ENCODE measurements at regions of chr1 and their contacts with region 1.

Region 1: GRCh38 chr1:30911046-30911954 is 2.7 kb upstream of the SDC3 start:
- DNase-seq: peak; percentile 94
- ATAC-seq: peak; percentile 68

Region 2: DNA sequence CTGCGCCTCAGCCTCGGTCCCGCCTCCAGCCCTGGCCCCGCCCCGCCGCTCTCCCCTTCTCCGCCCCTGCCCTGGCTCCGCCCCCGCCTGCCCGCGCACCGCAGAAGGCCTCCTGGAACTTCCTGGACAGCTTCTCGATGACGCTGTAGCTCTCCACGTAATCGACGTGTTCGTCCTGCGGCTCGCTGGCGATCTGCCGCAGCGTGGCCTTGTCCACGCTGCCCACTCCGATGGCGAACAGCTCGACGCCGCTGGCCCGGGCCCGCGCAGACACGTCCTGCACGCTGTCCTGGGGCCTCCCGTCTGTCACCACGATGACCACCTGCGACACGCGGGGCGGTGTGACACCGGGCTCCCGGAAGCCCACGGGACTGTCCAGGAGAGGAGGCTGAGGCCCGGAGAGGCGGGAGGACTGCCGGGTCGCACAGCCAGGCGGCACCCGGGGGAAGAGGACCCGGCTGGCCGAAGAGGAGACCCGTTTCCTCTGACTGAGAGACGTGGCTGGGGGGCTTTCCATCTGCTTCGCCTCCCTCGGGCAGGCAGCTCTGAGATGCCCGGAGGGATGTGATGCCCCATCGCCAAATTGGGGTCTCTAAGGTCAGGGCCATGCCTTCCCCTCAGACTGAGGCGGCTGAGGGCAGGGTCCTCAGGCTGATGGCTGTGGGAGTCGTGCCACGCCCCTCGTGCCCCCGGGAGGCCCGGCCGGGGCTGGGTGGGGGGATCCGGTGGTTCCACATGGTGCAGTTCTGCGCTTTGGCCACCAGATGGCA is 192.5 kb before region 1 on chr1:
- intact Hi-C with region 1: loop called (anchors 2 to 5 kb)
- DNase-seq: peak; percentile 98
- ATAC-seq: peak; percentile 87 to 89

Region 3: GRCh38 chr1:30779294-30780071 is 131.8 kb before region 1 on chr1:
- intact Hi-C with region 1: loop called (anchors 1 to 5 kb)
- DNase-seq: peak; percentile 84
- ATAC-seq: peak; percentile 65 to 72

Region 4: DNA sequence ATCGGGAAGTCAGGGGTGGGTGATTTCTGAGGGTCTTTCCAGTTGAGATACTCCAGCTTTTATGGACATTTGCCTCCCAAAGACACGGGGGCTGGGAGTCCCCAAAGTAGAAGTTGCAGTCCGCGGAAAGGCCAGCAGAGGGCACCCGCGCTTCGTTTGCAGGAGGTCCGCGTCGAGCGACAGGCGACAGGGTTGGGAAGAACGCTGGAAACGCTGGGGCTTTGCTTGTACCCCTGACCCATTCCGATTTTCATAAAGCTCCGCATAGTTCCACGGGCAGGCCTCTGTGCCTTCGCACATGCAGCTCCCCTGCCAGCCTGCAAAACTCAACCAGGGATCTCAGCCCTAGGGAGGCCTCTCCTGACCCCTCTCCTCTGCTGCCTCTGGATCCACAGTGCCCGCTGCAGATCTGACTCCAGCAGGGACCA is 109.5 kb before region 1 on chr1:
- intact Hi-C with region 1: loop called (anchors 1 to 5 kb)
- DNase-seq: peak; percentile 83
- ATAC-seq: peak; percentile 38 to 66

Region 5: DNA sequence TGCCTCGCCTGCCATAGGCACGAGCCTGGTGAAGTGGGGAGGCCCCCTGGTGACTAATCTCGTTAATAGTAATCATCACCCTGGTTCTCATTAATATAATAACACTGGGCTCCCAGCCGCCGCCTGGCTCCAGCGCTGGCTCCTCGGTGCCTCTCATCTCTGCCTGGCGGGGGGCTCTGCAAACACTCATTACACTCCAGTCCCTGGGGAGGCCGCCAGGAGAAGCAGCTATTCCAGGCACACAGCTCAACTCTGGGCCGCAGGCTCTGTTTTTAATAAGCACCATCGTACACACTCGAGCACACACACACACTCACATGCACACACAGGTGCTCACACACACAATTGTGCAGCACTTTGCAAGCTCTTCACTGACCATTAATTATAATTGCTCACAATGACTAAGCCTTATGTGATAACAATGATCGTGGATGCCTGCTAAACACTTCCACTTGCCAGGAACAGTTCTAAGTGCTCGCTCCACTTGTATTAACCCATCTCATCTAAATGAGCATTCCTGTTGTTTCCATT is 55.0 kb before region 1 on chr1:
- intact Hi-C with region 1: loop called in 1 of 2 experiments (anchors 10 kb)
- DNase-seq: no peak
- ATAC-seq: no peak

Region 6: DNA sequence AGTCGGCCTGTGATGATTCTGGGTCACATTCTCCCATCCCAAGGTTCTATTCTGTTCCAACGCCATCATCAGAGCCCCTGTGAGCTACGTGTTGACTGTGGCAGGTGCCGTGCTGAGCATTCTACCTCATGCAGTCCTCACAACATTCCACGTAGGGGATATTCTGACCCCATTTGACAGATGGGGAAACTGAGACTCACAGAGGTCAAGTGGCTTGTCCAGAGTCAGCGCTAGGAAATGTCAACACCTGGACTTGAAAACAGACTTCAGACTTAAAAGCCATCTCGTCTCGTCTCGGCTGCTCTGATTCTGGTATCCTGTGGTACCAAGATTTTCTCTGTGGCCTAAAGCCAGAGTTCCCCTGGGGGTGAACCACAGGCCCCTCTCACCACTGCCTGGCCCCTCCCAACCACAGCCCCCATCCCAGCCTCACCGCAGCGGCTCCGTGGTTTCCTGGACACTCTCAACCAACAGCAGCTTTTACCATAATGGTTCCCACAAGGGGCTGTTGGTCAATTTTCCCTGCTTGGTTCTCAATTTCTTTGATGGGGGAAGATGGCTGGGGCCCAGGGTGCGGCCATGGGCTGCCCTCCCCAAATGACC is 42.4 kb before region 1 on chr1:
- intact Hi-C with region 1: no loop called
- DNase-seq: no peak
- ATAC-seq: no peak

Region 7: GRCh38 chr1:30942326-30942963 is 31.1 kb after region 1 on chr1:
- intact Hi-C with region 1: no loop called
- DNase-seq: no peak
- ATAC-seq: no peak